ENCODE measurements at regions of chr18 and their contacts with region 1.

Region 1: DNA sequence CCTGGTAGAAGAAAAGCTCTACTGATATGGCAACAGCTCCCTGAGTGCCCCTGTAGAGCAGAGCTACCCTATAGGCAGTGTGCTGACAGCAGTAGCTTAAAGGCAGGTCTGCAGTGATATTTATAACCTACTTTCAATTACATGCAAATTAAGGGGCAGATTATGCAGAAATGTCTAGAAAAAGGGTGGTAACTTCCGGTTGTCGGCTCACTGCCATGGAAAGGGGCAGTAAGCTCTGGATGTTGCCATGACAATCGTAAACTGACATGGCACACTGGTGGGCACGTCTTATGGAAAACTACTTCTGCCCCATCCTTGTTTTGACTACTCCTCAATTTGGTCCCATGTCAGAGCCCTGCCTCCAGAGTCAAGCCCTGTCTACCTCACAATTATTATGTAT is 2.9 kb upstream of the TYMS start:
- DNase-seq: no peak
- ATAC-seq: no peak
- H3K4me3 ChIP-seq: no peak overlapping the region
- H3K27ac ChIP-seq: no peak overlapping the region
- H3K4me1 ChIP-seq: peaks cover 37% of the 10 kb centered on the region
- H3K27me3 ChIP-seq: no peaks in the 10 kb centered on the region
- CTCF ChIP-seq: no peak

Region 2: DNA sequence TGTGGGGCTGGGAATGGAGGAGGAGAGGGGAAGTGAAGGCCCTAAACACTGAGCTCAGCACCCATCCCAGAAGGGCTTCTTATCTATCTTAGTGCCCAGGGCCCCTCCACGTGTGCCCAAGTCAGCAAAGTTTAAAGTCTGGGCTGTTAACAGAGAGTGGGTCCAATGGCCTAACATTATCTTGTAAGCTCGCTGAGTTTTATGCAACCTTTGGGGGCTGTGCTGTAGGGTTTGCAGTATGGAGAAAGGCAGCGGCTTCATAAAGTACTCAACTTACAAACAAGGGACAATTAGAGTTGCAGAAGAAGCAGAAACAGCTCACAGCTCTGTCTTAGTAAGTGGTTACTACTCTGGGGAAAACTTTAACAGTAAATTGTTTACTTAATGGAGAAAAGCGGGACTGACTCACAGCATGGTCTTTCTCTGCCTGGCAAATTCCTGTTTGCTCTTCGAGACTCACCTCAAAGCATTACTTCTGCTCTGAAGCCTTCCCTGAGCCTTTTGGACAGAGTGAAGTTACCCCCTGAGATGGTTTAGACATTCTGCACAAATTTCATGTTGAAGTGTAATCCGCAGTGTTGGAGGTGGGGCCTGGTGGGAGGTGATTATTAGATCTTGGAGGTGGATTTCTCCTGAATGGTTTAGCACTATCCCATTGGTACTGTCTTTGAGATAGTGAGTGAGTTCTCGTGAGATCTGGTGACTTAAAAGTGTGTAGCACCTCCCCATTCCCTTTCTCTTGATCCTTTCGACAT is 48.8 kb after region 1 on chr18:
- CTCF ChIA-PET with region 1: no interaction called
- POLR2A ChIA-PET with region 1: interaction called, 14 read pairs
- in situ Hi-C with region 1: no loop called
- intact Hi-C with region 1: no loop called
- DNase-seq: peak; percentile 32
- ATAC-seq: peak; percentile 75
- H3K4me3 ChIP-seq: no peak overlapping the region
- H3K27ac ChIP-seq: no peak overlapping the region
- H3K4me1 ChIP-seq: peaks cover 10% of the 10 kb centered on the region; the same call in 1 of the 2 replicates
- H3K27me3 ChIP-seq: no peaks in the 10 kb centered on the region
- CTCF ChIP-seq: no peak

Measured in Panc1 (cell line).